ENCODE measurements at regions of chr20 and their contacts with region 1.

Region 1: GRCh38 chr20:49323622-49324238 is 45.9 kb upstream of the ZNFX1 start:
- DNase-seq: peak; percentile 66 to 80 (median 77)
- H3K4me3 ChIP-seq: peak overlapping the region in 1 of 3 experiments; percentile 36
- H3K4me3 Mint-ChIP-seq: peak overlapping the region; percentile 61 to 75
- H3K27ac ChIP-seq: peak overlapping the region; percentile 49 to 66
- H3K27ac Mint-ChIP-seq: peak overlapping the region; percentile 12 to 95 (median 84)
- H3K4me1 ChIP-seq: peaks cover 22 to 24% of the 10 kb centered on the region in 2 donors
- H3K4me1 Mint-ChIP-seq: peaks cover 39% of the 10 kb centered on the region
- H3K27me3 ChIP-seq: peaks cover 22 to 27% of the 10 kb centered on the region in 2 donors
- H3K27me3 Mint-ChIP-seq: peaks cover 27 to 31% (median 28%) of the 10 kb centered on the region in 3 donors
- CTCF ChIP-seq: peak; percentile 25

Region 2: GRCh38 chr20:49281059-49281912 is 42.4 kb before region 1 on chr20:
- intact Hi-C with region 1: loop called (anchors 5 kb)
- DNase-seq: peak; percentile 75 to 87 (median 80)
- H3K4me3 ChIP-seq: peak overlapping the region in 1 of 3 experiments; percentile 92
- H3K4me3 Mint-ChIP-seq: peak overlapping the region; percentile 35 to 39
- H3K27ac ChIP-seq: peak overlapping the region; percentile 65 to 94
- H3K27ac Mint-ChIP-seq: peak overlapping the region; percentile 81 to 99 (median 98)
- H3K4me1 ChIP-seq: peaks cover 35 to 58% of the 10 kb centered on the region in 2 donors
- H3K4me1 Mint-ChIP-seq: peaks cover 40% of the 10 kb centered on the region
- H3K27me3 ChIP-seq: no peaks in the 10 kb centered on the region
- H3K27me3 Mint-ChIP-seq: peaks cover 0 to 5% (median 0%) of the 10 kb centered on the region in 3 donors
- CTCF ChIP-seq: no peak

Region 3: GRCh38 chr20:49361862-49362660 is 38.3 kb after region 1 on chr20:
- intact Hi-C with region 1: no loop called
- DNase-seq: no peak
- H3K4me3 ChIP-seq: no peak overlapping the region
- H3K4me3 Mint-ChIP-seq: no peak overlapping the region
- H3K27ac ChIP-seq: no peak overlapping the region
- H3K27ac Mint-ChIP-seq: no peak overlapping the region
- H3K4me1 ChIP-seq: no peaks in the 10 kb centered on the region
- H3K4me1 Mint-ChIP-seq: no peaks in the 10 kb centered on the region
- H3K27me3 ChIP-seq: no peaks in the 10 kb centered on the region
- H3K27me3 Mint-ChIP-seq: peaks cover 6 to 11% (median 6%) of the 10 kb centered on the region in 3 donors
- CTCF ChIP-seq: no peak

Measured in CD14-positive monocyte (primary cell).